ENCODE measurements at regions of chr17 and their contacts with region 1.

Region 1: GRCh38 chr17:55527540-55528118 is 16.4 kb upstream of the SMIM36 start:
- DNase-seq: peak; percentile 24
- H3K27ac ChIP-seq: no peak overlapping the region
- CTCF ChIP-seq: peak; percentile 39

Region 2: GRCh38 chr17:54694287-54694887 is 833.2 kb before region 1 on chr17:
- CTCF ChIA-PET with region 1: no interaction called
- POLR2A ChIA-PET with region 1: no interaction called
- DNase-seq: no peak
- H3K27ac ChIP-seq: no peak overlapping the region
- CTCF ChIP-seq: no peak

Region 3: GRCh38 chr17:55601874-55602364 is 74.3 kb after region 1 on chr17:
- CTCF ChIA-PET with region 1: interaction called, 36 read pairs
- POLR2A ChIA-PET with region 1: no interaction called
- DNase-seq: peak; percentile 29
- H3K27ac ChIP-seq: no peak overlapping the region
- CTCF ChIP-seq: peak; percentile 64

Region 4: DNA sequence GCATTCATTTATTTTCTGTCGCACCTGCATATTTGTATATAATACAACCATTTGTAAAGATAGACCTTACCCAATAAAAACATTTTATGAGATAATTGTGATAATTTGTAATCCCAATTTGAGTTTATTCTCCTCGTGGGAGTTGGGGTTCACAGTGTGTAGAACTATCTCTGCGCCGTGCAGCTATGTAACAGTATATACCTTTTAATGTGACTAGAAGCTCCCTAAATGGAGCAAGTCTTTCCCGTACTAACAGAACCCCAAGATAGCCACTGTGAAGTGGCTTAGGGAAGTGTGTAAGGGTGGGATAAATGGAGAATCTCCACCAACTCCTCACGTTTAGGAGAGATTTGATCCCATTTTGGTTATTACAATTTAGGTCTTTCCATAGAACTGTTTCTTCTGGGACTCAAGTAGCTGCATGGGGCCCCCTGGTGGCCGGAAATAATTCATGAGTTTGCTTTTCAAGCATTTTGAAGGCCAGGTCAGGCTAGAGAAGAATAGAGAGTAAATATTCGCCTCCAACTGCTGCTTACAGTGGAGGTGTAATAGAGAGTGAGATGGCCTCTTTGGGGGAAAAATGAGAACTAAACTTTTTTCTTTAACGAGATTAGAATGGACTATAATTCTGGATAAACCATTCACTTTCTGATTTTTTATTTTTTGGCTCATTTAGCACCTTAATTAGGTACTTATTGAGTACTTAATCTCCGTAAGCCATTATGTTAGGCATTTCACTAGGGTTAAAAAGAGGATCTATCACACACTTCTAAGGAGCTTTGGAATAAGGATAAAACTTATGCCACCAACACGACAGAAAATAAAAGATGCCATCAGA is 190.5 kb after region 1 on chr17:
- CTCF ChIA-PET with region 1: interaction called, 15 read pairs
- POLR2A ChIA-PET with region 1: no interaction called
- DNase-seq: peak; percentile 24
- H3K27ac ChIP-seq: no peak overlapping the region
- CTCF ChIP-seq: peak; percentile 80

Region 5: GRCh38 chr17:55770148-55770870 is 242.7 kb after region 1 on chr17:
- CTCF ChIA-PET with region 1: interaction called, 30 read pairs
- POLR2A ChIA-PET with region 1: no interaction called
- DNase-seq: peak; percentile 74
- H3K27ac ChIP-seq: no peak overlapping the region
- CTCF ChIP-seq: peak; percentile 68

Measured in RWPE1 (cell line).